Activated T-helper 2 cell treated with anti-CD3 and anti-CD28 coated beads, Interferon-gamma antibody, Interleukin-2, Interleukin-4, amounts not matched to agents 10 μg/mL and 5 μg/mL and 100 μg/mL, durations not matched to agents 14 hours and 24 hours and 36 hours (primary cell): ENCODE measurements at regions of chr2 and their contacts with region 1.

Region 1: DNA sequence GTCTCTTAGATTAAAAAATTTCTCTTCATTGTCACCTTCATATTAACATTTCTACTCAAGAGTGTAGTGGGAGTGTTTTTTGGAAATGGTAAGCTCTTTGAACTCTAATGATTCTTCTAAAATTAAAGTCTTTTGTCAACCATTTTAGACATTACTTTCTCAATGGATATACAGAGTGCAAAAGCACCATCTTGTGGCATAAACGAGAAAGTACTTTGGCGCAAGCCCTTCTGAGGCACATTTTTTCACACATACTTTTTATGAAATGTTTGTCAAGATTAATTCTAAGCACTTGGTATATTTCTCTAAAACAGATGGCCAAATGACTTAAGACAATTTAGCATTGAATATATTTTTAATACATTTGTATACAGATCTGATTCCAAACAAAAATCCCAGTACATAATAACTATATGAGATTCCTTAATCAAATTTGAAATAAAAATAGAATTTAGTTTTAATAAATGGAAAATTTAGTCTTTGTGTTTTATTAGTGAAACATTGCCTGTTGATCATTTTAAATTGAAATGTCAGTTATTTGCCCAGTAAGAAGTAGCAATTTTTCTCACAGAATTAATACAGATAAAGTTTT is 63.3 kb upstream of the GALNT5 start:
- DNase-seq: no peak
- H3K4me3 Mint-ChIP-seq: no peak overlapping the region
- H3K27ac Mint-ChIP-seq: no peak overlapping the region
- H3K4me1 Mint-ChIP-seq: peaks cover 20% of the 10 kb centered on the region
- H3K27me3 Mint-ChIP-seq: peaks cover 14% of the 10 kb centered on the region

Region 2: GRCh38 chr2:155368934-155369333 is 1825.3 kb before region 1 on chr2:
- intact Hi-C with region 1: loop called (anchors 2 kb)
- DNase-seq: no peak
- H3K4me3 Mint-ChIP-seq: no peak overlapping the region
- H3K27ac Mint-ChIP-seq: no peak overlapping the region
- H3K4me1 Mint-ChIP-seq: no peaks in the 10 kb centered on the region
- H3K27me3 Mint-ChIP-seq: peaks cover 5% of the 10 kb centered on the region

Region 3: GRCh38 chr2:156589381-156590079 is 604.7 kb before region 1 on chr2:
- intact Hi-C with region 1: loop called (anchors 5 kb)
- DNase-seq: no peak
- H3K4me3 Mint-ChIP-seq: no peak overlapping the region
- H3K27ac Mint-ChIP-seq: no peak overlapping the region
- H3K4me1 Mint-ChIP-seq: peaks cover 11% of the 10 kb centered on the region
- H3K27me3 Mint-ChIP-seq: no peaks in the 10 kb centered on the region

Region 4: GRCh38 chr2:157055660-157056199 is 138.5 kb before region 1 on chr2:
- intact Hi-C with region 1: loop called (anchors 10 kb)
- DNase-seq: no peak
- H3K4me3 Mint-ChIP-seq: no peak overlapping the region
- H3K27ac Mint-ChIP-seq: no peak overlapping the region
- H3K4me1 Mint-ChIP-seq: peaks cover 2% of the 10 kb centered on the region
- H3K27me3 Mint-ChIP-seq: peaks cover 8% of the 10 kb centered on the region